ENCODE measurements at regions of chr17 and their contacts with region 1.

Region 1: DNA sequence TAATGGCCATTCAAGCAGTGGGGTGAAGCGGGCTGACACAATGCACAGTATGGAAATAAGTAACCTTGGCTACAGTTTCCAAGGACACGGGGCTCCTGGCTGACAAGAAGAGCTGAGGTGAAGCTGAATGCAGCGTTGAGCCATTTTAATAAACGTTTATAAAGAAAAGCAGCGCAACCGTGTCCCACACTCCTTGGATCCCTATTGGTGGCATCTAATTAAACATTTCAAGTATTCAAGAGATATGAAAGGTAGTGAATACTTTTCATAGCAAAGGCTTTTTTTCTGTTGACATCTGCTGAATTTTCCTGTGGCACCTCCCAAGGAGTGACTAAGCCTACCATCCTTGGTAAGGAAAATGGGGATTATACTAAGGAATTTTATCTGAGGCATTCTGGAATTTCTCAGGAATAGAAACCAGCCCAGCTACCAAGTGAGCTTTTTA is 26.5 kb downstream of the DUSP14 start:
- DNase-seq: no peak
- H3K4me3 ChIP-seq: no peak overlapping the region
- CTCF ChIP-seq: no peak

Region 2: GRCh38 chr17:37527249-37527851 is 11.2 kb after region 1 on chr17:
- CTCF ChIA-PET with region 1: interaction called, 52 read pairs
- POLR2A ChIA-PET with region 1: no interaction called
- DNase-seq: no peak
- H3K4me3 ChIP-seq: no peak overlapping the region
- CTCF ChIP-seq: peak; percentile 67

Measured in AG04449 (cell line).